Naive thymus-derived CD4-positive, alpha-beta T cell (primary cell): ENCODE measurements at regions of chr11 and their contacts with region 1.

Region 1: GRCh38 chr11:44574610-44575287 is 9.3 kb downstream of the CD82 start:
- DNase-seq: peak in 8 of 9 donors; percentile 19 to 59 (median 42)
- ATAC-seq: peak; percentile 64
- H3K4me3 ChIP-seq: no peak overlapping the region
- H3K4me3 Mint-ChIP-seq: peak overlapping the region; percentile 57 to 88 (median 72)
- H3K27ac ChIP-seq: peak overlapping the region; percentile 58
- H3K27ac Mint-ChIP-seq: peak overlapping the region; percentile 19 to 94 (median 87)
- H3K4me1 ChIP-seq: peaks cover 79 to 84% of the 10 kb centered on the region in 2 donors
- H3K4me1 Mint-ChIP-seq: peaks cover 62 to 96% (median 93%) of the 10 kb centered on the region in 7 donors
- H3K27me3 ChIP-seq: no peaks in the 10 kb centered on the region
- H3K27me3 Mint-ChIP-seq: no peaks in the 10 kb centered on the region

Region 2: DNA sequence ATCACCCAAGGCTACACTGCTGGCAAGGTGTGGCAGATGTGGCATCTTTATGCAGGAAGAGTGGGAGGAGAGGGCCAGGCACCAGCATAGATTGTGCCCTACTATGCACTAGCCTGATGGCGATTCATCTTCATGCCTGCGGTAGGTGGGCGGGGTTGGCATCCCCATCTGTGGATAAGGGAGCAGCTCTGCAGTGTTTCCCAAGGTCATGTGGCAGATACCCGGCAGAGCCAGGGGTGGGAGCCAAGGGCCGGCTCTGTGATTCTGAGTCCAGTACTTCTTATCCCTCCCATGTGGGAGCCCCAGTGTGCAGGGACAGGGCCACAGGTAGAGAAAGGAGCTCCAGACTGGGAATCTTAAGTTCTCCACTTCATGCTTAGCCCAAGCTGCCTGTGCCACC is 10.7 kb after region 1 on chr11:
- CTCF ChIA-PET with region 1: interaction called, 3 read pairs
- POLR2A ChIA-PET with region 1: interaction called, 12 read pairs
- intact Hi-C with region 1: no loop called
- DNase-seq: no peak
- ATAC-seq: no peak
- H3K4me3 ChIP-seq: no peak overlapping the region
- H3K4me3 Mint-ChIP-seq: no peak overlapping the region
- H3K27ac ChIP-seq: no peak overlapping the region
- H3K27ac Mint-ChIP-seq: peak overlapping the region in 1 of 9 donors; percentile 64
- H3K4me1 ChIP-seq: no peaks in the 10 kb centered on the region
- H3K4me1 Mint-ChIP-seq: peaks cover 5 to 51% (median 8%) of the 10 kb centered on the region in 7 donors
- H3K27me3 ChIP-seq: no peaks in the 10 kb centered on the region
- H3K27me3 Mint-ChIP-seq: no peaks in the 10 kb centered on the region

Region 3: DNA sequence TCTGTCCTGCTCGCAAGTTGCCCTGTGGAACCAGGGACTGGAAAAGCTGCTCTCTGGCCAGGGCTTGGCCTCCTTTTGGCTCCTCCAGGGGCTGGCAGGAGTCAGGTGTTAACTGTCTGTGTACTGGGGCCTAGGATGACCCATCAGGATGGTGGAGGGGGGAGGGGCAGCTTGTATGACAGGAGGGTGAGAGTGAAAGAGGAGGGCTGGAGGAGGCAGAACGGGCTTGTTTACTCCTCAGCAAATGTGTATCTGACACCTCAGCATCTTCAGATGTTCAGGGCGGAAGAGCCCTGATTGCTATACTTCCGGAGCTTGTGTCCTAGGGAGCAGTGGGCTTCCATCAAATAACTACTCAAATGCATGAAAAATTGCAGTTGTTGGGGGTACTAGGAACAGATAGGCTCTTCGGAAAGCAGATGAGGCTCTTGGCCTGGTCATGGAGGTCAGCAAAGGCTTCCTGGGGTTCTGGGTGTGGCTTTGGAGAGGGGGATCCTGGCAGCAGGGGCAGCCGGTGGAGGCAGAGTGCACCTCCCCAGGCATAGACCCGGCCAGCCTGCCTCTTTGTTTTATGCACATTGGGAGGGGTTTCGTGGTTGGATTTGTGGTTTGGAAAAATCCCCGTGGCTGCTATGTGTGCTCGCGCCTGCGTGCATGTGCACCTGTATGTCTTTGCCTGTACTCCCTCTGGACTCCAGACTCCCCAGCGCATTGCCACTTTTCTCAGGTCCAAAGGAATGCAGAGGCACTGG is 22.0 kb after region 1 on chr11:
- CTCF ChIA-PET with region 1: interaction called, 3 read pairs
- POLR2A ChIA-PET with region 1: interaction called, 13 read pairs
- intact Hi-C with region 1: loop called (anchors 1 kb)
- DNase-seq: peak; percentile 28 to 81 (median 70)
- ATAC-seq: peak; percentile 86
- H3K4me3 ChIP-seq: peak overlapping the region; percentile 54
- H3K4me3 Mint-ChIP-seq: peak overlapping the region; percentile 69 to 91 (median 80)
- H3K27ac ChIP-seq: peak overlapping the region; percentile 70
- H3K27ac Mint-ChIP-seq: peak overlapping the region; percentile 87 to 98 (median 95)
- H3K4me1 ChIP-seq: peaks cover 37 to 38% of the 10 kb centered on the region in 2 donors
- H3K4me1 Mint-ChIP-seq: peaks cover 15 to 80% (median 71%) of the 10 kb centered on the region in 7 donors
- H3K27me3 ChIP-seq: no peaks in the 10 kb centered on the region
- H3K27me3 Mint-ChIP-seq: no peaks in the 10 kb centered on the region

Region 4: GRCh38 chr11:44611687-44612434 is 37.1 kb after region 1 on chr11:
- CTCF ChIA-PET with region 1: interaction called, 9 read pairs
- POLR2A ChIA-PET with region 1: interaction called, 21 read pairs
- intact Hi-C with region 1: no loop called
- DNase-seq: peak in 8 of 9 donors; percentile 35 to 57 (median 48)
- ATAC-seq: peak; percentile 82
- H3K4me3 ChIP-seq: no peak overlapping the region
- H3K4me3 Mint-ChIP-seq: peak overlapping the region in 9 of 10 donors; percentile 27 to 69 (median 60)
- H3K27ac ChIP-seq: peak overlapping the region; percentile 54
- H3K27ac Mint-ChIP-seq: peak overlapping the region; percentile 75 to 91 (median 89)
- H3K4me1 ChIP-seq: peaks cover 60 to 78% of the 10 kb centered on the region in 2 donors
- H3K4me1 Mint-ChIP-seq: peaks cover 40 to 96% (median 83%) of the 10 kb centered on the region in 7 donors
- H3K27me3 ChIP-seq: no peaks in the 10 kb centered on the region
- H3K27me3 Mint-ChIP-seq: no peaks in the 10 kb centered on the region